Endothelial cell of umbilical vein (primary cell): ENCODE measurements at regions of chr20 and their contacts with region 1.

Region 1: DNA sequence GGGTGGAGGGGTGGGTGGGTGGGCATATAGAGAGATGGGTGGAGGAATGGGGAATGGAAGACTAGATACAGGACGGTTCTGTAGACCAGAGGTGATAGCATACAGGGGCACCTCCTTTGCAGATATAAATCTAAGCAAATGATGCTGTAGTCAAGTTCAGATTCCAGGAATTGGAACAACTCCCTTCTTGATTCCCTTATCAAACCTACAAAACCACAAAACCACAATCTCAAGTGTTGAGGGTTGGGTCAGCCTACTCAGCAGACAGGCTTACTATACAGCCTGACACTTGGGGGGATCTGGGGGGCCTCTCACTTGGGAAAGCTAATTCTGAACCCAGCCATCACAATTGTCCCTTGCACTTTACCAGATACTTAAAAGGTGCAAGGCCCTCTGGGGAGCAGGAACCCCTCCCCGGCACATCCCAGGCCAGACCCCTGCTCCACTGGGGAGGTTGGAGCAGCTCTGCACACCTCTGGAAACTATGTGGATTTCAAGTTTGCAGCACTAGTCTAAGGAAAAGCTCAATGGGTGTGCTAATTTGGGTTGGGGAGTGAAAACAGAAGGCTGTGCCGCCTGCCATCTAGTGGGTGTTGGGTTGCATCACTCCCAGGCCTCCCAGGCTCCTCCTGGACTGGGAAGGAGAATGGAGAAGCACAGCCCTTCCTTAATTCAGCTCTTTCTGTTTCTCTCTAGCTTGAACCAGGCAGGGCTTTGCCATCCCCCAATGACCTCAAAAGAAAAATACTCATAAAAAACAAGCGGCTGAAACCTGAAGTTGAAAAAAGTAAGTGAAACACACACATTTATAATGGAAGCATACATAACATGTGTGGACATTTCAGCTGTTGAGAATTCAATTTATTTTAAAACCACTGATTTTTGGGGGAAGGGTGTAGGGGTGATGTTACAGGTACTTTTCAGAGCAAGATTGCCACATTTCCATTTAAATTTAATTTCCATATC is 121.2 kb upstream of the LAMP5 start:
- DNase-seq: peak; percentile 37
- H3K4me3 ChIP-seq: no peak overlapping the region
- H3K27ac ChIP-seq: no peak overlapping the region
- H3K4me1 ChIP-seq: no peaks in the 10 kb centered on the region
- H3K27me3 ChIP-seq: no peaks in the 10 kb centered on the region
- CTCF ChIP-seq: peak; percentile 54 to 80
- POLR2A ChIP-seq: no peak

Region 2: GRCh38 chr20:8749986-8750385 is 643.2 kb before region 1 on chr20:
- CTCF ChIA-PET with region 1: interaction called, 20 read pairs
- POLR2A ChIA-PET with region 1: no interaction called
- dilution Hi-C with region 1: no loop called
- intact Hi-C with region 1: no loop called
- DNase-seq: no peak
- H3K4me3 ChIP-seq: no peak overlapping the region
- H3K27ac ChIP-seq: no peak overlapping the region
- H3K4me1 ChIP-seq: no peaks in the 10 kb centered on the region
- H3K27me3 ChIP-seq: no peaks in the 10 kb centered on the region
- CTCF ChIP-seq: no peak
- POLR2A ChIP-seq: no peak

Region 3: DNA sequence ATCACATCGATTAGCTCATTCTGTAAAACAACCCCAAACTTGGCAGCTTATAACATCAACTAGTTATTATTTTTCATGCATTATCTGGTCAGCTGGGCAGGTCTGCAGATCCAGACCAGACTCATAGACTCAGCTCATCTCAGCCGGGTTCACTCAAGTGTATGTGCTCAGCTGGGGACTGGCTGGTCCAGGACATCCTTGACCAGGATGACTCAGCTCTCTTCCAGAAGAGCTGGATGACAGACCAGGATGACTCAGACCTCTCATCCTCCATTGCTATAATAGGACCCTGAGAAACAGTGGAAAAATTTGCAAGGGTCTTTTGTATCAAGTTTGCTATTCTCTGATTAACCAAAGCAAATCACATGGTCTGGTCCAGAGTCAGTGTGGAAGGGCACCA is 636.8 kb before region 1 on chr20:
- CTCF ChIA-PET with region 1: interaction called, 38 read pairs
- POLR2A ChIA-PET with region 1: no interaction called
- dilution Hi-C with region 1: no loop called
- intact Hi-C with region 1: loop called (anchors 1 kb)
- DNase-seq: peak; percentile 62
- H3K4me3 ChIP-seq: no peak overlapping the region
- H3K27ac ChIP-seq: no peak overlapping the region
- H3K4me1 ChIP-seq: peaks cover 6% of the 10 kb centered on the region
- H3K27me3 ChIP-seq: no peaks in the 10 kb centered on the region
- CTCF ChIP-seq: no peak
- POLR2A ChIP-seq: no peak

Region 4: GRCh38 chr20:9573335-9574121 is 180.4 kb after region 1 on chr20:
- CTCF ChIA-PET with region 1: no interaction called
- POLR2A ChIA-PET with region 1: no interaction called
- dilution Hi-C with region 1: no loop called
- intact Hi-C with region 1: no loop called
- DNase-seq: no peak
- H3K4me3 ChIP-seq: no peak overlapping the region
- H3K27ac ChIP-seq: no peak overlapping the region
- H3K4me1 ChIP-seq: no peaks in the 10 kb centered on the region
- H3K27me3 ChIP-seq: peaks cover 6 to 10% of the 10 kb centered on the region in 2 experiments
- CTCF ChIP-seq: no peak
- POLR2A ChIP-seq: no peak